Activated CD4-positive, alpha-beta T cell treated with anti-CD3 and anti-CD28 coated beads, Interleukin-2, amount 10 ng/mL, durations not matched to agents 24 days and 14 days (primary cell): ENCODE measurements at regions of chr1 and their contacts with region 1.

Region 1: DNA sequence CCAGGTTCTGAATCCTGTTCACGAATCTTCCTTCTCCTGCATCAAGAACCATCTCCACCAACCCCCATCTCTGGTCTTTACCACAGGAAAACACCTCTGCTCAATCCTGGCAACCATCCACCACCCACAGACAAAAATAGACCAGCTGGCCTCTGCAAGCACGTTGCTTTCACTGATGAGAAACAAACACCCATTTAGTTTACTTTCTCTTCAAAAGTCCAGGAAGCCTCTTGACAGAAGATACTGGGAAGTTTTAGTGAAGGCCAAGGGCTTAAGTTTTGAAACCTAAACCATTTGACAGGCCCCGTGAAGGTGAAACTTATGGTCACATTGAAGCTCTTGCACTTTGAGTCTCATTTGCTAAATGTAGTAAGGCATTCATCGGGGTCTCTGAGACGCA is 122.6 kb upstream of the PPP2R5A start:
- DNase-seq: peak; percentile 79
- H3K4me3 Mint-ChIP-seq: peak overlapping the region; percentile 47
- H3K27ac Mint-ChIP-seq: peak overlapping the region; percentile 72
- H3K4me1 Mint-ChIP-seq: peaks cover 37% of the 10 kb centered on the region
- H3K27me3 Mint-ChIP-seq: no peaks in the 10 kb centered on the region

Region 2: DNA sequence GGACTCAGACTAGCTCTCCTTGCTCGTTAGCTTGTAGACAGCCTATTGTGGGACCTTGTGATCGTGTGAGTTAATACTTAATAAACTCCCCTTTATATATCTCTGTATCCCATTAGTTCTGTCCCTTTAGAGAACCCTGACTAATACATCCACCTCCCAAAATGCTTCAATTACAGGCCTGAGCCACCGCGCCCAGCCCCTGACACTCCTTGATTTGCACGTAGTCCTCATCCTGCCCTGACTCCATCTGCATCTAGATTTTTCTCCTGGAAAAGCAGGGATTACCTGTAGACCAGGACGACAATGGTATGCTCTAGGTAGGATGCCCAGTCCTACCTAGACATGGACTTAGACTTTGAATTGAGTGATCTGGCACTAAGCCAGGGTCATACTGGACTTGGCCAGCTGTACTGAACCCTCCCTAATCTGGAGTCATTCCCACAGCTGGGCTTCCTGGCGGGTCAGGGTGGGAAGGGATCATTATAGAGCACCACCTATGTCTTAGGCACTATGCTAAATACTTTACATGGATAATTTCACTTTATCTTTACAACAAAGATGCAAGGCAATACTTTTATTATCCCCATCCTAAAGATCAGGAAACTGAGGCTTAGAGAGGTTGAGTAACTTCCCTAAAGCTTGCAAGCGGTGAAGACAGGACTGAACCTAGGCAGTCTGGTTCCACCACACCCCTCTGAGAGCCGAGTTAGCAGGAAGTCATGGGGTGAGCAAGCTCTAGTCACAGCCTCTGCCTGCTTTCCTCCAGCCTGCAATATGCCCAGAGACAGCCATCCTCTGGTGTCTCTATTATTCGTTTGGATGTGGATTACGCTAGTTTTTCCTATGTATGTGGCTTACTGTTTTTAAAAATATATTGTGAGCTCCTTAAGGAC is 37.7 kb before region 1 on chr1:
- intact Hi-C with region 1: loop called (anchors 5 kb)
- DNase-seq: peak; percentile 73
- H3K4me3 Mint-ChIP-seq: no peak overlapping the region
- H3K27ac Mint-ChIP-seq: no peak overlapping the region
- H3K4me1 Mint-ChIP-seq: peaks cover 24% of the 10 kb centered on the region
- H3K27me3 Mint-ChIP-seq: no peaks in the 10 kb centered on the region

Region 3: DNA sequence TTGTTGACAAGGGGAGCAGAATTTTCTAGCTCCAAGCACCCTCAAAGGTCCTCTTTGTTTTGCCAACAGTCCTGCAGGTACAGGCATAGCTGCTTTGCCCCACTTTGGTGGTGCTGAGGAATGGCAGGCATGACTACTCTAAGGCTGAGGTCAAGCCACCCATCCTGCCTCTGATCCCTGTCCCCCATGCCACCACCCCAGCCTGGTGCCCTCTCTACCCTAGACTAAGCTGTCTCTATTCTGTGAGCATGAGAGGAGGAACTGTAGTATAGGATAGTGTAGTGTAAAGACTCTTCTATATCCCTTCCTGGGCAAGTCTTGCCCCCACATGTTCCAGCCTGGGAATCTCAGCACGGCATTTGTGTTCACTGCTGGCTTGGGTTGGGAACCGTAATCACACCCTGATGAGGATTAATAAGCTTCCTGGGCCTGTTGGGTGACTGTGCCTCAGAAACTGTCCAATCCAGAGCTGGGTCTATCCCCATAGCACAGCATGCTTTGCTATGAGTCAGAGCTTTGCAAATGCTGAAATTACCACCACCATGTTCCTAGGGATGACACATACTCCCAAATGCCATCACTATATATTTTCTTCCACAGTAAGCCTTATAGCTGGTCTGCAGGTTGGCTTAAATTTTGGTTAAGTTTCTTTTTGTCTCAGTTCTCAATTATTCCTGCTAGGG is 16.9 kb after region 1 on chr1:
- intact Hi-C with region 1: loop called (anchors 2 kb)
- DNase-seq: no peak
- H3K4me3 Mint-ChIP-seq: no peak overlapping the region
- H3K27ac Mint-ChIP-seq: no peak overlapping the region
- H3K4me1 Mint-ChIP-seq: peaks cover 6% of the 10 kb centered on the region
- H3K27me3 Mint-ChIP-seq: no peaks in the 10 kb centered on the region

Region 4: GRCh38 chr1:212218911-212219310 is 56.3 kb after region 1 on chr1:
- intact Hi-C with region 1: loop called (anchors 1 kb)
- DNase-seq: peak; percentile 70
- H3K4me3 Mint-ChIP-seq: peak overlapping the region; percentile 34
- H3K27ac Mint-ChIP-seq: peak overlapping the region; percentile 81
- H3K4me1 Mint-ChIP-seq: peaks cover 27% of the 10 kb centered on the region
- H3K27me3 Mint-ChIP-seq: no peaks in the 10 kb centered on the region

Region 5: DNA sequence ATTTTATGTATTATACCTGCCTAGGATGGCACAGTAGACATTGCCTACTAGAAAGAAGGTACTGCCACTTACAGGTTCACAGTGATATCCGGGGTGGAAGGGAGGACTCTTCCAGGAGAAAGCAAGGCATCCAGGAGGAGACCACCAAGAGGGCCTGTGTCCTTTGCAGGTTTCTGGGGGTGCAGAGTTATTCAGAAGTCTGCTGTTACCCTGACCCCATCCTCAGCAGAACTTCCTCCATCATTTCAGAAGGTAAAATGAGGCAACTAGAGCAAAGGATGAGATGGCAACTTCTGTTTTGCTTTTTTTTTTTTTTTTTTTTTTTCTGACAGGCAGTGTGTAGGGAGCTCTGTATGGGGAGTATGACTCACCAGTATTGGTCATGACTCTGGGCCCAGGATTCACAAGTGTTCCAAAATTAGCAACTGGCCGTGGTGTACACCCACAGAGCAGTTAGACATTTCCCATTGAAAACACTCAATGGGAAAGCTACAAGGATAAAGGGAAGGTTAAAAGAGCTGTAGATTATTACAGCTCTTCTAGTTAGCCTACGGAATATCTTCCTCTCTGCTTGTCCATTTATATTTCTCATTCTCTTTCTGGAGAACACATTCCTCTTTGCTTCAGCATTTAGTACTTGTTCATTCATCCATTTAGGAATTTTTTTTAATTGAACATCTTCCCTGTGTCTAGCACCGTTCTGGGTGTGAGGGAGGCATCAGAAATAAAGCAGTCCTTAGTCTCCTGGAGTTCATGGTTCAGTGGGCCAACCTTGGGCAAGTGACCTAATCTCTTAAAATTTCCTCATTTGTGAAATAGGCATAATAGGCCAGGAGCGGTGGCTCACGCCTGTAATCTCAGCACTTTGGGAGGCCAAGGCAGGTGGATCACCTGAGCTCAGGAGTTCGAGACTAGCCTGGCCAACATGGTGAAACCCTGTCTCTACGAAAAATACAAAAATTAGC is 72.1 kb after region 1 on chr1:
- intact Hi-C with region 1: loop called (anchors 1 kb)
- DNase-seq: peak; percentile 74
- H3K4me3 Mint-ChIP-seq: peak overlapping the region; percentile 46
- H3K27ac Mint-ChIP-seq: peak overlapping the region; percentile 80
- H3K4me1 Mint-ChIP-seq: peaks cover 51% of the 10 kb centered on the region
- H3K27me3 Mint-ChIP-seq: no peaks in the 10 kb centered on the region